GM12878 (cell line): ENCODE measurements at regions of chr1 and their contacts with region 1.

Region 1: GRCh38 chr1:156146020-156146768 is 7.2 kb upstream of the SEMA4A start:
- DNase-seq: peak; percentile 66
- ATAC-seq: peak; percentile 62
- H3K4me3 ChIP-seq: peak overlapping the region; percentile 30
- H3K27ac ChIP-seq: peak overlapping the region; percentile 67
- H3K4me1 ChIP-seq: peaks cover 49% of the 10 kb centered on the region
- H3K27me3 ChIP-seq: no peaks in the 10 kb centered on the region
- CTCF ChIP-seq: peak; percentile 74 to 82 (median 77)
- EP300 ChIP-seq: no peak
- POLR2A ChIP-seq: no peak
- RAD21 ChIP-seq: peak; percentile 94

Region 2: DNA sequence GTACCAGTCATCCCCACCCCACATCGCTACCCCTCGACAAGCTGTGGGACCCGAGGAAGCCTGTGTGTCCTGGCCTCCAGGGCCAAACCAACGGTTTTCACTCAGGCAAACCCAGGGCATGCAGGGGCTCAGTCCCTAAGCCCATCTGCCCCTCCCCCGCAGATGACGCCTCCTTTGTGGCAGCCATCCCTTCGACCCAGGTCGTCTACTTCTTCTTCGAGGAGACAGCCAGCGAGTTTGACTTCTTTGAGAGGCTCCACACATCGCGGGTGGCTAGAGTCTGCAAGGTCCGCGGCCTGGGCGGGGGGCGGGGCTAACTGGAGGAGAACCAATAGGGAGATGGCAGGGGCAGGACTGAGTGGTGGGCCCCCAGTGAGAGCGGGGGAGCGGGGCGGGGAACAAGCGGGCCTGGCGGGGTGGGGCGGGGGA is 14.6 kb after region 1 on chr1:
- CTCF ChIA-PET with region 1: interaction called, 44 read pairs
- POLR2A ChIA-PET with region 1: interaction called, 9 read pairs
- RAD21 ChIA-PET with region 1: interaction called, 10 read pairs
- SMC1A ChIA-PET with region 1: interaction called, 25 read pairs
- in situ Hi-C with region 1: no loop called
- intact Hi-C with region 1: no loop called
- DNase-seq: no peak
- ATAC-seq: peak; percentile 48
- H3K4me3 ChIP-seq: no peak overlapping the region
- H3K27ac ChIP-seq: no peak overlapping the region; the same call in 1 of the 2 replicates
- H3K4me1 ChIP-seq: peaks cover 48% of the 10 kb centered on the region
- H3K27me3 ChIP-seq: no peaks in the 10 kb centered on the region
- CTCF ChIP-seq: no peak
- EP300 ChIP-seq: no peak
- POLR2A ChIP-seq: no peak
- RAD21 ChIP-seq: no peak

Region 3: DNA sequence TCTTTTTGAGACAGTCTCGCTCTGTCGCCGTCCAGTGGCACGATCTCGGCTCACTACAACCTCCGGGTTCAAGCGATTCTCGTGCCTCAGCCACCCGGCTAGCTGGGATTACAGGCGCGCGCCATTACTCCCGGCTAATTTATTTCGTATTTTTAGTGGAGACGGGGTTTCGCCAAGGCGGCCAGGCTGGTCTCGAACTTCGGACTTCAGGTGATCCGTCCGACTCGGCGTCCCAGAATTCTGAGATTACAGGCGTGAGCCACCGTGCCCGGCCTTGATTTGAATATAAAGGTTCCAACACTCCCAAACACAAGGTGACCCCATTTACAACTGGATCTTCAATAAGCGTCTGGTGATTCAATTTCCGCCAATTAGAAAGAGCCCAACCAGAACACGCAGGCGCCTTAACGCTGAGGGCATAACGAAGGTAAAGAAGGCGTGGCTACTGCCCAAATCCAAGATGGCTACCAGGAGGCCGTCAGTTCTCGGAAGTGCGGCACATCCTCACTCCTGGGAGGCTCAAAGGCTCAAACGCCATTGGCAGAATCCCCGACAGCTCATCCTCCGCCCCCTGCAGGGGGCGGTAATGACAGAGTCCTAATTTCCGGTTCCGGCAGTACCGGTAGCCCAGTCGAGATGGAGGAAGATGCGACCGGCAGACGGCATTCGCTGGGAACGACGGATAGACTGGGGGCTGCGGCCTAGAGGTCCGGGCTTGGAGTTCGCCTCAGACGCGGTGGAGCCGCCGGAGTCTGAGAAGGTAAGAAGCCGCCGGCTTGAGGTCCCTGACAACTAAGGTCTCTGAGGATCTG is 47.5 kb after region 1 on chr1 and contains the start of gene SLC25A44:
- CTCF ChIA-PET with region 1: interaction called, 68 read pairs
- POLR2A ChIA-PET with region 1: interaction called, 158 read pairs
- RAD21 ChIA-PET with region 1: interaction called, 139 read pairs
- SMC1A ChIA-PET with region 1: interaction called, 32 read pairs
- in situ Hi-C with region 1: no loop called
- intact Hi-C with region 1: no loop called
- DNase-seq: peak; percentile 100
- ATAC-seq: peak; percentile 96
- H3K4me3 ChIP-seq: peak within 1 kb of the TSS; percentile 100
- H3K27ac ChIP-seq: peak within 1 kb of the TSS; percentile 87
- H3K4me1 ChIP-seq: peaks cover 6% of the 10 kb centered on the region
- H3K27me3 ChIP-seq: no peaks in the 10 kb centered on the region
- CTCF ChIP-seq: peak; percentile 35 to 48 (median 45); a peak in 5 of 6 replicates
- EP300 ChIP-seq: no peak
- POLR2A ChIP-seq: peak; percentile 89
- RAD21 ChIP-seq: no peak
- polyA plus RNA-seq, gene SLC25A44: 7.1 to 9.2 TPM

Region 4: DNA sequence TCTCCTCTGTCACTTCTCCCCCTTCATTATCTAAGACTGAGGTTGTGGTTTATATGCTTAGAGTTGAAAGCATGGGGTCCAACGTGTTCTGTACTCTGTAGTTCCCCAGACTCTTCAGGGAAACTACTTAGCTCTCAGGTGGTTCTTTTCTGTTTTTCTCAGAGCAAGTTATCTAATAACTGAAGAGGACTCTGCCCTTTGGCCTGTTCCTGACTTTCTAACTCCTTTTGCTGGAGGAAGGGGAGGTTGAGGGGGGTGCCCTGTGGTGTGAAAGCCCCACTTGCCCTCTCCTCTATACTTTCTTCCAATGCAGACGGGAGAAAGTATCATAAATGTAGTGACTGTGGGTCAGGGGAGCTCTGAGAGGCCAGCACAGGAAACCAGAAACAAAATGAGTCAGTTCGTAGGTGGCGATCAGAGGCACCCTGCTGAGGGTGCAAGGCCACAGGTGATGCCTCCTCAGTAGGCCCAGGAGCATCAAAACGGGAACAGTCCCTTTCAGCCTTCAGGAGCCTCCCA is 52.7 kb after region 1 on chr1:
- CTCF ChIA-PET with region 1: interaction called, 68 read pairs
- POLR2A ChIA-PET with region 1: interaction called, 158 read pairs
- RAD21 ChIA-PET with region 1: interaction called, 139 read pairs
- SMC1A ChIA-PET with region 1: interaction called, 32 read pairs
- in situ Hi-C with region 1: no loop called
- intact Hi-C with region 1: no loop called
- DNase-seq: peak; percentile 41
- ATAC-seq: peak; percentile 80
- H3K4me3 ChIP-seq: peak overlapping the region; percentile 50; the same call in 1 of the 2 replicates
- H3K27ac ChIP-seq: peak overlapping the region; percentile 69
- H3K4me1 ChIP-seq: peaks cover 11% of the 10 kb centered on the region
- H3K27me3 ChIP-seq: no peaks in the 10 kb centered on the region
- CTCF ChIP-seq: no peak
- EP300 ChIP-seq: peak in 1 of 2 experiments; percentile 21; a peak in 2 of 4 replicates
- POLR2A ChIP-seq: no peak
- RAD21 ChIP-seq: no peak

Region 5: GRCh38 chr1:156212833-156213643 is 66.8 kb after region 1 on chr1 and contains the start of gene PMF1:
- CTCF ChIA-PET with region 1: interaction called, 502 read pairs
- POLR2A ChIA-PET with region 1: interaction called, 21 read pairs
- RAD21 ChIA-PET with region 1: interaction called, 24 read pairs
- SMC1A ChIA-PET with region 1: interaction called, 411 read pairs
- in situ Hi-C with region 1: no loop called
- intact Hi-C with region 1: no loop called
- DNase-seq: peak; percentile 88
- ATAC-seq: peak; percentile 99
- H3K4me3 ChIP-seq: peak within 1 kb of the TSS; percentile 96
- H3K27ac ChIP-seq: peak within 1 kb of the TSS; percentile 99
- H3K4me1 ChIP-seq: peaks cover 10% of the 10 kb centered on the region
- H3K27me3 ChIP-seq: no peaks in the 10 kb centered on the region
- CTCF ChIP-seq: 0 out of 6 replicates have a peak, but pooled peaks of 1 of the 3 experiments have one; percentile 1
- EP300 ChIP-seq: no peak
- POLR2A ChIP-seq: peak; percentile 94
- RAD21 ChIP-seq: no peak
- polyA plus RNA-seq, gene PMF1: 6.7 to 17.6 TPM

Region 6: GRCh38 chr1:156268336-156268735 is 122.1 kb after region 1 on chr1:
- CTCF ChIA-PET with region 1: no interaction called
- POLR2A ChIA-PET with region 1: no interaction called
- RAD21 ChIA-PET with region 1: no interaction called
- SMC1A ChIA-PET with region 1: no interaction called
- in situ Hi-C with region 1: no loop called
- intact Hi-C with region 1: no loop called
- DNase-seq: no peak
- ATAC-seq: no peak
- H3K4me3 ChIP-seq: no peak overlapping the region
- H3K27ac ChIP-seq: no peak overlapping the region
- H3K4me1 ChIP-seq: no peaks in the 10 kb centered on the region
- H3K27me3 ChIP-seq: no peaks in the 10 kb centered on the region
- CTCF ChIP-seq: no peak
- EP300 ChIP-seq: no peak
- POLR2A ChIP-seq: no peak
- RAD21 ChIP-seq: no peak

Region 7: DNA sequence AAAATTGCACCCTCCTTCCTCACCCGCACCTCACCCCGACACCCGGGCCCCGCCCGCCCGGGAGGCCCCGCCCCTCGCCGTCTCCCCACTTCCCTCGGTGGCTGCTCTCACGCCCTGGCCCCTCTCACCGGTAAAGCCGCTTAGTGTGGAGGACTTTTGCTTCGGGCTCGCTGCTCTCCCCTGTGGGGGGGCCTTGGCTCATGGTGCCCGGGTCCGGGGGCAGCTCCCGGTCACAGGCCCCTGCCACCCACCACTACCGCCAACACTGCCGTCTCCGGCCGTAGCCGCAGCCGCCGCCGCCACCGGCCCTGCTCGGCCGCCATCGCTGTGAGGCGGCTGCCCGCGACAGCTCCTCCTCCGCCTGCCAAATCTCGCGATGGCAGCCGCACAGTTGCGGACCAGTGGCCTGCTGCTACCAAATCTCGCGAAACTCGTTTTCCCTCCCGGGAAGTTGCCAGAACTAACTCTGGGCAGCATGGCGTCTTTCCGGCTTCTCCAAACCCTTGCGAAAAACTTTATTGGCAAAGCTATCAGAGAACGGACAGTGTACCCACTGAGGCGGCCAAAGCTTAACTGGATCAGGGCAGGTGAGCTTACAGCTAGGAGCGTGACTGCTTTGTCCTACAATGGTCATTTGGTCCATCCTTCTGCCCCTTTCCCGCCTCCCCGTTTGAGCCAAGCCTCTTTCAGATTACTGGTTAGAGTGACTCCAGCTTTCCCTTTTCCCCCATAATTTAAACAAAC is 136.5 kb after region 1 on chr1 and contains the start of gene SMG5:
- CTCF ChIA-PET with region 1: interaction called, 43 read pairs
- POLR2A ChIA-PET with region 1: interaction called, 3 read pairs
- RAD21 ChIA-PET with region 1: interaction called, 6 read pairs
- SMC1A ChIA-PET with region 1: interaction called, 13 read pairs
- in situ Hi-C with region 1: no loop called
- intact Hi-C with region 1: no loop called
- DNase-seq: peak; percentile 96
- ATAC-seq: peak; percentile 93
- H3K4me3 ChIP-seq: peak within 1 kb of the TSS; percentile 94
- H3K27ac ChIP-seq: peak within 1 kb of the TSS; percentile 86
- H3K4me1 ChIP-seq: peaks cover 15% of the 10 kb centered on the region; the same call in 1 of the 2 replicates
- H3K27me3 ChIP-seq: no peaks in the 10 kb centered on the region
- CTCF ChIP-seq: no peak
- EP300 ChIP-seq: no peak
- POLR2A ChIP-seq: peak; percentile 100
- RAD21 ChIP-seq: no peak
- polyA plus RNA-seq, gene SMG5: 0.76 to 1.9 TPM

Region 8: GRCh38 chr1:156319664-156320063 is 173.5 kb after region 1 on chr1:
- CTCF ChIA-PET with region 1: interaction called, 31 read pairs
- POLR2A ChIA-PET with region 1: interaction called, 3 read pairs
- RAD21 ChIA-PET with region 1: interaction called, 10 read pairs
- SMC1A ChIA-PET with region 1: interaction called, 19 read pairs
- in situ Hi-C with region 1: loop called (anchors 5 kb)
- intact Hi-C with region 1: loop called (anchors 5 kb)
- DNase-seq: no peak
- ATAC-seq: no peak
- H3K4me3 ChIP-seq: no peak overlapping the region
- H3K27ac ChIP-seq: no peak overlapping the region
- H3K4me1 ChIP-seq: no peaks in the 10 kb centered on the region
- H3K27me3 ChIP-seq: no peaks in the 10 kb centered on the region
- CTCF ChIP-seq: peak; percentile 41 to 51 (median 46)
- EP300 ChIP-seq: no peak
- POLR2A ChIP-seq: no peak
- RAD21 ChIP-seq: peak; percentile 64

Region 9: DNA sequence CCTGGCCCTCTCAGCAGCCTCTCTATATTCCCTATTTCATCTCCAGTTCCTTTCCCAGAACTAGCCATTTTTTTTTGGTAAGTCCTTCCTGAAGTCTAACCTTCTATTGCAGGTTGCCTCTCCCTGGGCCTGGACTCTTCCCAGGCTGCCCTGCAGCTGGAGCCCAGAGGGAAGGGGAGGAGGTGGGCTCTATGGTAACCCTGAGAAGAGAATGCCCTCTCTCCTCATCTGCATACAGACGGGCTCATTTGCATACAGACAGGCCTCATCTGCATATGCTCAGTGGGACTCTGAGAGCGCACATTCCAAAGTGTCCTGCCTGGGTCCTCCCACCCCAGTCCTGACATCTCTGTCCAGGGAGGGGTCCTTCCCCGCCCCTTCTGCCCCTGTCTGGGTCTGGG is 255.5 kb after region 1 on chr1:
- CTCF ChIA-PET with region 1: no interaction called
- POLR2A ChIA-PET with region 1: no interaction called
- RAD21 ChIA-PET with region 1: no interaction called
- SMC1A ChIA-PET with region 1: no interaction called
- in situ Hi-C with region 1: no loop called
- intact Hi-C with region 1: no loop called
- DNase-seq: no peak
- ATAC-seq: no peak
- H3K4me3 ChIP-seq: no peak overlapping the region
- H3K27ac ChIP-seq: no peak overlapping the region
- H3K4me1 ChIP-seq: no peaks in the 10 kb centered on the region; the same call in 1 of the 2 replicates
- H3K27me3 ChIP-seq: peaks cover 0 to 3% of the 10 kb centered on the region in 2 experiments; a peak in 1 of 4 replicates
- CTCF ChIP-seq: no peak
- EP300 ChIP-seq: no peak
- POLR2A ChIP-seq: no peak
- RAD21 ChIP-seq: no peak

Region 10: DNA sequence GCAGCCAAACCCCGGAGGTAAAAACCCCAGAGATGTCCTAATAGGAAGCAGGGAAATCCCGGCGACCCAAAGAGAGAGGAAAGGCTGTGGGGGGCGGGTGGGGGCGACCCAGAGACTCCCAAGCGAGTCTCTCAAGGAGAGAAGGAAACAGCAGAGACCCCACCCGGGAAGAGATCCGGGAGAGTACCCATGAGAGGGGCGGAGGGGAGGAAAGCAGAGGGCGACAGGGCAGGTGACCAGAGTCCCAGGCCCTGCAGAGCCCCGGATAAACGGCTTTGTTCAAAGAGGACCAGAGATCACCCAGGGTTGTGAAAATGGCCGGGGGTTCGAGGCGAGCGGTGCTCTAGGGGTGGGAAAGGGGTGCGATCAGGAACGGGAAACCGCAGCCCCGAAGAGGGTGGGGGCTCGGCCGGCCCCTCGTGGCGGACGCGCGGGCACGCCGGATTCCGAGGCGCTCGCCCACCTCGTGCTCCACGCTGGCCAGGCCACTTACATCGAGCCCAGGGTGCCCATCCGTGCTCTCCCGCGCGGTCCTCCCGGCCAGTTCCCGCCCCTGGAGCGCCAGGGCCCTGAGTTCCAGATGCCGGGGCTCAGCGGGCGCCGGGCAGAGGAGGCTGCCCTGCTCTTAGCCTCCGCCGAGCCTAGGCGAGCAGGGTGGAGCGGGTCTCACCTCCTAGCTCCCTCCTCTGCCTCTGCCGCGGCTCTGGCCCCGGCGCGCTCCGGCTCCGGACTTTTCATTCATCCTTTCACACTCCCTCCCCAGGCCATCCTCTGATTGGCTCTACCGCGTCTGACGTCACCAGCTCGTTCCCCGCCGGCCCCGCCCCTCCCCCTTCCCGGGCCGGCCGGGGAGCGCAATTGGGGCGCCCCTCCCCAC is 275.1 kb after region 1 on chr1:
- CTCF ChIA-PET with region 1: no interaction called
- POLR2A ChIA-PET with region 1: no interaction called
- RAD21 ChIA-PET with region 1: no interaction called
- SMC1A ChIA-PET with region 1: no interaction called
- in situ Hi-C with region 1: no loop called
- intact Hi-C with region 1: no loop called
- DNase-seq: peak; percentile 39
- ATAC-seq: peak; percentile 88
- H3K4me3 ChIP-seq: peak overlapping the region; percentile 75
- H3K27ac ChIP-seq: peak overlapping the region; percentile 33; the same call in 1 of the 2 replicates
- H3K4me1 ChIP-seq: peaks cover 8% of the 10 kb centered on the region
- H3K27me3 ChIP-seq: peaks cover 6 to 13% of the 10 kb centered on the region in 2 experiments
- CTCF ChIP-seq: no peak
- EP300 ChIP-seq: no peak
- POLR2A ChIP-seq: peak; percentile 82
- RAD21 ChIP-seq: no peak

Region 11: GRCh38 chr1:157595356-157595755 is 1449.2 kb after region 1 on chr1:
- CTCF ChIA-PET with region 1: no interaction called
- POLR2A ChIA-PET with region 1: no interaction called
- RAD21 ChIA-PET with region 1: no interaction called
- SMC1A ChIA-PET with region 1: no interaction called
- in situ Hi-C with region 1: no loop called
- intact Hi-C with region 1: no loop called
- DNase-seq: peak; percentile 78
- ATAC-seq: peak; percentile 83
- H3K4me3 ChIP-seq: no peak overlapping the region
- H3K27ac ChIP-seq: no peak overlapping the region
- H3K4me1 ChIP-seq: peaks cover 35% of the 10 kb centered on the region
- H3K27me3 ChIP-seq: no peaks in the 10 kb centered on the region
- CTCF ChIP-seq: no peak
- EP300 ChIP-seq: peak; percentile 84 to 91
- POLR2A ChIP-seq: no peak
- RAD21 ChIP-seq: no peak